IMR-90 (cell line): ENCODE measurements at regions of chr11 and their contacts with region 1.

Region 1: GRCh38 chr11:123195188-123196059 is at the start of gene CLMP:
- DNase-seq: peak; percentile 82
- ATAC-seq: peak; percentile 79
- H3K4me3 ChIP-seq: peak within 1 kb of the TSS; percentile 73
- H3K27ac ChIP-seq: peak within 1 kb of the TSS; percentile 93
- H3K4me1 ChIP-seq: peaks cover 23% of the 10 kb centered on the region
- H3K27me3 ChIP-seq: no peaks in the 10 kb centered on the region
- CTCF ChIP-seq: no peak
- POLR2A ChIP-seq: peak; percentile 78; the same call in 1 of the 2 replicates
- RAD21 ChIP-seq: no peak
- total RNA-seq, gene CLMP: 54.7 and 56.1 TPM in 2 replicates

Region 2: DNA sequence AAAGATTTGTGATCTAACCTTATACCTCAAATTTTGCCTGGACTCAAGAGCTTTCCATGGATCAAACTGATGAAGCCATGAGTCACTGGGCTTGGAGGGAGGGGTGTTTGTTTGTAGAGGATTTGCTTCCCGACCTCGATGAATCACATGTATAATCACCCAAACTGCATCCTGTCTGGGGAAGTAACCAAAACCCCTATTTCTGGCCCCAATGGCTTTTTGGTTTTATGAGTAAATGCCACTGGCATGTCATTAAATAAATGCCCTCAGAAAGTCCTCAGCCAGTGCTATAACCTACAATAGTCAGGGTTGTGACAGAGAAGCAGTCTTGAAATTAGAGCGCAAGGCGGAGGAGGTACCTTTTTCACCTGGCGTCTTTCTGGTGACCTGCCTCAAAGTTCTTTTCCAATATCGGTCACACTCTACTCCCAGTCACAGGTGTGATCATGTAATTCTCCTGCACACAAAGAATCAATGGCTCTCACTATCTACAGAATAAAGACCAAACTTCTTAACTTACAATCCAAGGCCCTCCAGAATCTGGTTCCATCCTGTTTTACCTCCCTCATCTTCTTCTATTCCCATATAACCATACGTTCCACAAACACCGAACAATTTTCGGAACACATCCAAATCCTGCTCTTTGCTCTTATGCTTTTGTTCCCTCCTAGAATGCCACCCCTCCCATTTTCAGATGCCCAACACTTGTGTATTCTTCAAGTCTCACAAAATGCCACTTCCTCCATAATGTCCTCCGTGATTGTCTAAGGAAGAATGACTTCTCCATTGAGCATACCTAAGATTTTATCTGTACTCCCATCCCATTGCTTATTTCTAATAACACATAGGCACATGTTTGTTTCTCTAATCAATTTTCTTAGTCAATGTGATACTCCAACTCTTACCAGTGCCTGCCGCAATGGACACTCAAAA is 998.1 kb before region 1 on chr11:
- CTCF ChIA-PET with region 1: no interaction called
- POLR2A ChIA-PET with region 1: no interaction called
- dilution Hi-C with region 1: no loop called
- in situ Hi-C with region 1: loop called (anchors 25 kb)
- intact Hi-C with region 1: no loop called
- DNase-seq: peak; percentile 99
- ATAC-seq: peak; percentile 79
- H3K4me3 ChIP-seq: no peak overlapping the region
- H3K27ac ChIP-seq: peak overlapping the region; percentile 97
- H3K4me1 ChIP-seq: peaks cover 30% of the 10 kb centered on the region
- H3K27me3 ChIP-seq: no peaks in the 10 kb centered on the region
- CTCF ChIP-seq: no peak
- POLR2A ChIP-seq: 0 out of 2 replicates have a peak, but pooled peaks have one; percentile 36
- RAD21 ChIP-seq: no peak

Region 3: GRCh38 chr11:122697636-122698167 is 497.7 kb before region 1 on chr11:
- CTCF ChIA-PET with region 1: no interaction called
- POLR2A ChIA-PET with region 1: no interaction called
- dilution Hi-C with region 1: no loop called
- in situ Hi-C with region 1: loop called (anchors 25 kb)
- intact Hi-C with region 1: no loop called
- DNase-seq: peak; percentile 84
- ATAC-seq: peak; percentile 92
- H3K4me3 ChIP-seq: no peak overlapping the region
- H3K27ac ChIP-seq: 0 out of 2 replicates have a peak overlapping the region, but pooled peaks have one; percentile 5
- H3K4me1 ChIP-seq: peaks cover 4% of the 10 kb centered on the region
- H3K27me3 ChIP-seq: no peaks in the 10 kb centered on the region
- CTCF ChIP-seq: no peak
- POLR2A ChIP-seq: no peak
- RAD21 ChIP-seq: no peak

Region 4: DNA sequence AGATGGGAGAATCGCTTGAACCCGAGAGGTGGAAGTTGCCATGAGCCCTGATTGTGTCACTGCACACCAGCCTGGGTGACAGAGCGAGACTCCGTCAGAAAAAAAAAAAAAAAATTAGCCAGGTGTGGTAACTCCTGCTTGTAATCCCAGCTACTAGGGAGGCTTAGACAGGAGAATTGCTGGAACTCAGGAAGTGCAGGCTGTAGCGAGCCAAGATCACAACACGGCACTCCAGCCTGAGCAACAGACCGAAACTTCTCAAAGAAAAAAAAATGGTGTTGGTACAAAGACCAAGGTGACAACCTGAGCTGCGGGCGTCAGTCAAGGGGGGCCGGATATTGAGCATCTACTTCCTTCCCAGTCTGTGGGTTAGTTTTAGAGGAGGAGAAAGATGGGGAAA is 85.1 kb before region 1 on chr11:
- CTCF ChIA-PET with region 1: no interaction called
- POLR2A ChIA-PET with region 1: no interaction called
- dilution Hi-C with region 1: no loop called
- in situ Hi-C with region 1: no loop called
- intact Hi-C with region 1: loop called (anchors 5 kb)
- DNase-seq: no peak
- ATAC-seq: no peak
- H3K4me3 ChIP-seq: no peak overlapping the region
- H3K27ac ChIP-seq: no peak overlapping the region
- H3K4me1 ChIP-seq: peaks cover 13% of the 10 kb centered on the region
- H3K27me3 ChIP-seq: no peaks in the 10 kb centered on the region
- CTCF ChIP-seq: no peak
- POLR2A ChIP-seq: no peak
- RAD21 ChIP-seq: no peak

Region 5: DNA sequence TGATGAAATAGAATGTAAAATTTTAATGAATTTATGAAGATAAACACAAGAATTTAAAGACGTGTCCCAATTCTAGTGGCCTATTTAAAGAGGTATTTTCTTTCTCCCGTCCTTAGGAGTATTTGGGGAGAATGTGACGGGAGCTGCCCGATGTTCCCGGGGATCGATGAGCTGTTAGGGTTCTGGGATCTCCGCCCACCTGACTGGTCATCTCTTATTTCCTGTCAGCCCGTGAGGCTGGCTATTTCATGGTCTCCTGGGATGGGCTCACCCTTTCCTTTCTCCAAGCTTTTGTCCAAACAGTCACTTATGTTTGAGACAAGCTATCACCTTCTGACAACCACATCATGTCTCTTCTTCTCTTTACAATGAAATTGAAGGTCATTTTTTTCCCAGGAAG is 16.6 kb after region 1 on chr11:
- CTCF ChIA-PET with region 1: no interaction called
- POLR2A ChIA-PET with region 1: no interaction called
- dilution Hi-C with region 1: no loop called
- in situ Hi-C with region 1: no loop called
- intact Hi-C with region 1: loop called (anchors 2 kb)
- DNase-seq: peak; percentile 28
- ATAC-seq: peak; percentile 46
- H3K4me3 ChIP-seq: no peak overlapping the region
- H3K27ac ChIP-seq: peak overlapping the region; percentile 37; the same call in 1 of the 2 replicates
- H3K4me1 ChIP-seq: peaks cover 11% of the 10 kb centered on the region
- H3K27me3 ChIP-seq: no peaks in the 10 kb centered on the region
- CTCF ChIP-seq: no peak
- POLR2A ChIP-seq: no peak
- RAD21 ChIP-seq: no peak

Region 6: GRCh38 chr11:123233280-123233974 is 38.0 kb after region 1 on chr11:
- CTCF ChIA-PET with region 1: interaction called, 3 read pairs
- POLR2A ChIA-PET with region 1: no interaction called
- dilution Hi-C with region 1: no loop called
- in situ Hi-C with region 1: no loop called
- intact Hi-C with region 1: loop called (anchors 2 kb)
- DNase-seq: no peak
- ATAC-seq: 0 out of 2 replicates have a peak, but pooled peaks have one; percentile 5
- H3K4me3 ChIP-seq: no peak overlapping the region
- H3K27ac ChIP-seq: peak overlapping the region; percentile 49; the same call in 1 of the 2 replicates
- H3K4me1 ChIP-seq: peaks cover 31% of the 10 kb centered on the region
- H3K27me3 ChIP-seq: no peaks in the 10 kb centered on the region
- CTCF ChIP-seq: no peak
- POLR2A ChIP-seq: no peak
- RAD21 ChIP-seq: no peak